Left cardiac atrium (tissue), 4 donors: ENCODE measurements at regions of chr4 and their contacts with region 1.

Region 1: GRCh38 chr4:1856042-1856788 is at the start of gene LETM1:
- DNase-seq: peak; percentile 97
- ATAC-seq: peak; percentile 96 to 98
- total RNA-seq, gene LETM1: 37.2 to 50.5 TPM

Region 2: GRCh38 chr4:1870578-1871443 is 14.6 kb after region 1 on chr4 and contains the start of gene NSD2:
- intact Hi-C with region 1: loop called in 1 of 2 experiments (anchors 1 kb)
- DNase-seq: peak; percentile 91
- ATAC-seq: peak; percentile 88 to 94
- total RNA-seq, gene NSD2: 30.0 to 38.7 TPM